Activated CD8-positive, alpha-beta T cell treated with anti-CD3 and anti-CD28 coated beads for 36 hours (primary cell): ENCODE measurements at regions of chr18 and their contacts with region 1.

Region 1: DNA sequence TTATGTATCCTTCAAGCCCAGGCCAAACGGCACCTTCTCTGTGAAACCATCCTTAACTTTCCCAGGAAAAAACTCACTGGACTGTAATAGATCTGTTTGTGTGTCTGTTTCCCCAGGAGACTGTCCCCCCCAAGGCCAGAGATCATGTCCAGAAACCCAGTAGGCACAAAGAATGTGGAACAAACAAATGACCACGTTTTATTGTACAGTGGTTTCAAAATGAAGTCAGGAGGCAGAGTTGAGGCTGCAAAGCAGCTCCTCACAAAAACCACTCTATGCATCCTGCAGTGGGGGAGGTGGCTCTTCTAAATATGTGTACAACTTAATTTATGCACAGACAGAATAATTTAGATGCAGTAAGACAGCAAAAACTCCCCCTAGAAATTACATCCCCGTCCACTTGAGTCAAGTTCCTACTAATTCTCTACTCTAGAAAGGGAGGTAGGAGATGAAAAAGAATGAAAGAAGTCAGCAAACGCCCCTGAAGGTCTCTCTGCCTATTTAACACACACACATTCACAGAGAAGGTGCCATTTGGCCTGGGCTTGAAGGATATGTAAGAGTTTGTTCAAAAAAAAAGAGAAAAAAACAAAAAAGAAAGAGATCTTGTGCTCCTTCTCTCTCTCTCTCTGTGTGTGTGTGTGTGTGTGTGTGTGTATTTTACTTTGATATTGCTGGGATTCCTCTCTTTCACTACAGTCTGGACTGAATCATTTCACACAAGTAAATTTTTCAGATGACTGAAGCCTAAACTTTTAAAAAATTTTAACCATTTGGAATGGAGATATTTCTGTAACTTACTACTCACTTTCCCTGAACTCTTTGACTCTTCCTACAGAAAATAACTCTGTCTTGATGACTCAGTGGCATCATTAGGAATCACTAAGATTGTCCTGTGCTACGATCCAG is 19.5 kb downstream of the BCL2 start:
- DNase-seq: peak; percentile 83
- ATAC-seq: peak; percentile 77
- H3K4me3 Mint-ChIP-seq: peak overlapping the region; percentile 32
- H3K27ac Mint-ChIP-seq: peak overlapping the region; percentile 89
- H3K4me1 Mint-ChIP-seq: peaks cover 81% of the 10 kb centered on the region
- H3K27me3 Mint-ChIP-seq: no peaks in the 10 kb centered on the region
- CTCF ChIP-seq: no peak

Region 2: GRCh38 chr18:62584241-62585120 is 715.6 kb before region 1 on chr18:
- CTCF ChIA-PET with region 1: no interaction called
- POLR2A ChIA-PET with region 1: no interaction called
- intact Hi-C with region 1: no loop called
- DNase-seq: peak; percentile 94
- ATAC-seq: peak; percentile 85
- H3K4me3 Mint-ChIP-seq: peak overlapping the region; percentile 4
- H3K27ac Mint-ChIP-seq: peak overlapping the region; percentile 85
- H3K4me1 Mint-ChIP-seq: peaks cover 40% of the 10 kb centered on the region
- H3K27me3 Mint-ChIP-seq: no peaks in the 10 kb centered on the region
- CTCF ChIP-seq: peak; percentile 99

Region 3: GRCh38 chr18:63216516-63217311 is 83.4 kb before region 1 on chr18:
- CTCF ChIA-PET with region 1: no interaction called
- POLR2A ChIA-PET with region 1: interaction called, 4 read pairs
- intact Hi-C with region 1: loop called (anchors 5 kb)
- DNase-seq: peak; percentile 65
- ATAC-seq: peak; percentile 31
- H3K4me3 Mint-ChIP-seq: peak overlapping the region; percentile 53
- H3K27ac Mint-ChIP-seq: peak overlapping the region; percentile 92
- H3K4me1 Mint-ChIP-seq: peaks cover 94% of the 10 kb centered on the region
- H3K27me3 Mint-ChIP-seq: no peaks in the 10 kb centered on the region
- CTCF ChIP-seq: no peak

Region 4: DNA sequence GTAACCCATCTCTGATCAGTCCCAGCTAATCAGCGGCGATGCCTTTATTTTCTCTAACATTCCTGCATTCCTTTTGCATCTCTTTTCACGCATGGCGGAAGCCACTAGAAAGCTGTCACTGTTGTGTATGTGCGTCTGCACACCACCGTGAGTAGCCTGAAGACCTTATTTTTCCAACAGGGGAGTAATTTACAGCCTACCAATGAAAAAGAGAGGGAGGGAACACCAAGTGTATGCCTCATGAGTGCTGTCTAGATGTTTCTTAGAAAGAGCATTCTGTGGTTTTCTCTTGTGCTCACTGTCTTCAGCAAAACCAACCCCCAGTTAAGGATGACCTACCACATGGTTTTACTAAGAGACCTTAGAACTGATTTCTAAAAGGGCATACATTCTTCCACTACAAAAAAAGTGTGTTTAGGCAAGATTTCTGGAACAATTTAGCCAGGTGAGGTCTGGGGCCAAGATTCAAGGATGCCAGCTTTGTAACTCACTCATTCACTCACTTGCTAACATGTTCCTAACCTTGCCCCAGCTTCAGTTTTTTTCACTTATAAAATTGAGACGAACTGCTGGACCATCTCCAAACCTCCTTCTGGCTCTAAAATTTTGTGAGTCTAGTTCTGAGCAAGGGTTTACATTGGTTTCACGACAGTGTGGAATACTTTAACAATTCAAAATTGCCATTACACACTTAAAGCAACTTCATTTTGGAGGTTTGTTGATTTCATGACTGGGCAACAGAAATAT is 31.9 kb before region 1 on chr18:
- CTCF ChIA-PET with region 1: interaction called, 3 read pairs
- POLR2A ChIA-PET with region 1: interaction called, 6 read pairs
- intact Hi-C with region 1: loop called (anchors 5 kb)
- DNase-seq: peak; percentile 37
- ATAC-seq: peak; percentile 91
- H3K4me3 Mint-ChIP-seq: peak overlapping the region; percentile 57
- H3K27ac Mint-ChIP-seq: peak overlapping the region; percentile 84
- H3K4me1 Mint-ChIP-seq: peaks cover 83% of the 10 kb centered on the region
- H3K27me3 Mint-ChIP-seq: no peaks in the 10 kb centered on the region
- CTCF ChIP-seq: no peak